CD8-positive, alpha-beta memory T cell (primary cell): ENCODE measurements at regions of chr19 and their contacts with region 1.

Region 1: DNA sequence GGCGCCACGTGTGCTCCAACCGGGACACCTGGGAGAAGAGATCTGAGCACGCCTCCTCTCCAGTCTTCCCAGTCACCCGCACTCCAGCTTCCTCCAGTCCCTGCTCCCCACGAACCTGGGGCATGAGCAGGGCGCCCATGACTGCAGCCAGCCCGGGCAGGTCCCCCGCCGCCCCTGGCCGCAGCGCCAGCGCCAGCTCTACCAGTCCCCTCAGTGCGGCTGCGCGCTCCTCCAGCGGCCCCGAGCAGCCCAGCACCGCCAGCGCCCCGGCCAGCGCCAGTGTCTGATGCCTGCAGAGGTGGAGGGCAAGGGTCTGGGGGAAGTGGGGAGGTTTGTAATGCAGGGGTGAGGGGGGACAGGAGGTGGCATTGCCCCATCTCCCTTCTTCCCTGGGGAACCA is 13.1 kb downstream of the SH2D3A start:
- DNase-seq: no peak
- H3K4me3 ChIP-seq: no peak overlapping the region
- H3K4me3 Mint-ChIP-seq: no peak overlapping the region
- H3K27ac ChIP-seq: no peak overlapping the region
- H3K27ac Mint-ChIP-seq: peak overlapping the region in 2 of 8 donors; percentile 66 to 80
- H3K4me1 ChIP-seq: no peaks in the 10 kb centered on the region
- H3K4me1 Mint-ChIP-seq: peaks cover 5 to 13% (median 7%) of the 10 kb centered on the region in 3 donors
- H3K27me3 ChIP-seq: no peaks in the 10 kb centered on the region
- H3K27me3 Mint-ChIP-seq: no peaks in the 10 kb centered on the region

Region 2: GRCh38 chr19:6718741-6719539 is 35.2 kb before region 1 on chr19:
- CTCF ChIA-PET with region 1: no interaction called
- POLR2A ChIA-PET with region 1: no interaction called
- DNase-seq: peak in 3 of 5 donors; percentile 12 to 25 (median 18)
- H3K4me3 ChIP-seq: no peak overlapping the region
- H3K4me3 Mint-ChIP-seq: no peak overlapping the region
- H3K27ac ChIP-seq: no peak overlapping the region
- H3K27ac Mint-ChIP-seq: no peak overlapping the region
- H3K4me1 ChIP-seq: peaks cover 3% of the 10 kb centered on the region
- H3K4me1 Mint-ChIP-seq: peaks cover 12 to 15% (median 13%) of the 10 kb centered on the region in 3 donors
- H3K27me3 ChIP-seq: no peaks in the 10 kb centered on the region
- H3K27me3 Mint-ChIP-seq: no peaks in the 10 kb centered on the region

Region 3: GRCh38 chr19:6970443-6970842 is 216.3 kb after region 1 on chr19:
- CTCF ChIA-PET with region 1: no interaction called
- POLR2A ChIA-PET with region 1: interaction called, 13 read pairs
- DNase-seq: no peak
- H3K4me3 ChIP-seq: no peak overlapping the region
- H3K4me3 Mint-ChIP-seq: no peak overlapping the region
- H3K27ac ChIP-seq: no peak overlapping the region
- H3K27ac Mint-ChIP-seq: no peak overlapping the region
- H3K4me1 ChIP-seq: no peaks in the 10 kb centered on the region
- H3K4me1 Mint-ChIP-seq: no peaks in the 10 kb centered on the region
- H3K27me3 ChIP-seq: no peaks in the 10 kb centered on the region
- H3K27me3 Mint-ChIP-seq: peaks cover 10 to 17% of the 10 kb centered on the region in 2 donors